ENCODE measurements at regions of chr9 and their contacts with region 1.

Region 1: DNA sequence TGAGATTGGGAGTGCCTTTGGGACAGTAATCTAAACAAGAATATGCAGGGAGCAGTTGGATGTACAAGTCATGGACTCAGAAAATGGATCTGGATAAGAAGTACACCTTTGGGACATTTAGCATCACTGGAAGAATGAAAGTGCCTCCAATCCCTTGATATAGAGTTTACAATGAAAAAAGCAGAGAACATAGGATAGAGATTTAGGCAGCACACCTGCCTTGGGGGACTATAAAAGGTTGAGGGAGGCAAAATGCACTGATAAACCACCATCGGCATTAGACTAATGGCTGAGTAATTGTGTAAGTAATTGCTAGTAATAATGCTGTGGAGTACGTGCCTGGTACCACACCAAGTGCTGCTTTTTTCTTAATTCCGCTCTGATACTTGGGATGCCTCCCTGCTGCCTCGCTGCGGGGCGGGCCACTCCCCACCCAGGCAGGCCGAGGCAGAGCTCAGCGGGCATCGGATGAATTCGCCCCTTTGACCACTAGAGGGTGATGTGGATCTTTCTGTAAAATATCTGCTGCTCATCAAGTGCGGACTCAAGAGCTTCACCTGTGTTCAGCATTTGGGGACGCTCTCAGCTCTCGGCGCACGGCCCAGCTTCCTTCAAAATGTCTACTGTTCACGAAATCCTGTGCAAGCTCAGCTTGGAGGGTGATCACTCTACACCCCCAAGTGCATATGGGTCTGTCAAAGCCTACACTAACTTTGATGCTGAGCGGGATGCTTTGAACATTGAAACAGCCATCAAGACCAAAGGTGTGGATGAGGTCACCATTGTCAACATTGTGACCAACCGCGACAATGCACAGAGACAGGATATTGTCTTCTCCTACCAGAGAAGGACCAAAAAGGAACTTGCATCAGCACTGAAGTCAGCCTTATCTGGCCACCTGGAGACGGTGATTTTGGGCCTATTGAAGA is 99.9 kb downstream of the ANKRD18B start:
- H3K4me3 ChIP-seq: no peak overlapping the region
- H3K27ac ChIP-seq: no peak overlapping the region
- H3K4me1 ChIP-seq: no peaks in the 10 kb centered on the region; the same call in 1 of the 2 replicates
- CTCF ChIP-seq: peak; percentile 80

Region 2: GRCh38 chr9:33638391-33638915 is 14.5 kb after region 1 on chr9:
- CTCF ChIA-PET with region 1: interaction called, 30 read pairs
- POLR2A ChIA-PET with region 1: no interaction called
- H3K4me3 ChIP-seq: no peak overlapping the region
- H3K27ac ChIP-seq: no peak overlapping the region
- H3K4me1 ChIP-seq: no peaks in the 10 kb centered on the region
- CTCF ChIP-seq: no peak

Region 3: GRCh38 chr9:33676746-33677505 is 53.0 kb after region 1 on chr9:
- CTCF ChIA-PET with region 1: interaction called, 16 read pairs
- POLR2A ChIA-PET with region 1: no interaction called
- H3K4me3 ChIP-seq: peak overlapping the region; percentile 65
- H3K27ac ChIP-seq: peak overlapping the region; percentile 97
- H3K4me1 ChIP-seq: peaks cover 2% of the 10 kb centered on the region; the same call in 1 of the 2 replicates
- CTCF ChIP-seq: no peak

Region 4: DNA sequence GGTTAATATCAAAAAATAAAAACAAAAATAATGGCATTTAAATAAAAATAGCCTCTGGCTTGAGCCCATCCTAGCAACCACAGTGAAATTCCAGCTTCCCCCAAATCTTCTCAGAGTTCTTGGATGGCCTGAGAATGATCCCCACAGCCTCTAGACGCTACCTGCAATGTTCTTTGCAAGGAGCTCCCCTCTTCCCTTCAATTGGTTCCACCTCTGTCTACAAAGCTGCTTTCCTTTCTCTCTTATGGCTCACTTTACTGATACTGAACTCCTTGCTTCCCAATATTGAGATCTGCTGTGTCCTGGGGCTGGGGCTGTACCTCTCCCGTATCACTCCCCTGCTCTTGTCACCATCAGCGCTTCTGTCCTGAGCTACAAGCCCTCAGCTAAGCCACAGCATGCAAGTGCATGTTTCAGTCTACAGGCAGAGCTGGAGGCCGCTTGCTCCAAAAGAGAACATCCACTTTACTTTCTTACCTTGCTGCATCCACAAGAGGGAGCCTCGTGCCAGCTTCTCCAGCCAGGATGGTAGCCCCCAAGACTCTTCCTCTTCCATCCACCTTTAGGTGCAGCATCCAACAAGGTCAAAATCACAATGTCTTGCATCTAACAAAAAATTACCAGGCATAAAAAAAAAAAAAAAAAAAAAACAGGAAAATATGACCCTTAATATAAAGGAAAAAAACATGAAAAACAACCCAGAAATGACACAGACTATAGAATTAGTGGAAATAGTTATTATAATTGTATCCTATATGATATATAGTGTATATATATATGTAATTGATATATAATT is 114.1 kb after region 1 on chr9:
- CTCF ChIA-PET with region 1: interaction called, 15 read pairs
- POLR2A ChIA-PET with region 1: interaction called, 3 read pairs
- H3K4me3 ChIP-seq: no peak overlapping the region
- H3K27ac ChIP-seq: no peak overlapping the region
- H3K4me1 ChIP-seq: no peaks in the 10 kb centered on the region
- CTCF ChIP-seq: peak; percentile 65